PC-9 (cell line): ENCODE measurements at regions of chr2 and their contacts with region 1.

Region 1: DNA sequence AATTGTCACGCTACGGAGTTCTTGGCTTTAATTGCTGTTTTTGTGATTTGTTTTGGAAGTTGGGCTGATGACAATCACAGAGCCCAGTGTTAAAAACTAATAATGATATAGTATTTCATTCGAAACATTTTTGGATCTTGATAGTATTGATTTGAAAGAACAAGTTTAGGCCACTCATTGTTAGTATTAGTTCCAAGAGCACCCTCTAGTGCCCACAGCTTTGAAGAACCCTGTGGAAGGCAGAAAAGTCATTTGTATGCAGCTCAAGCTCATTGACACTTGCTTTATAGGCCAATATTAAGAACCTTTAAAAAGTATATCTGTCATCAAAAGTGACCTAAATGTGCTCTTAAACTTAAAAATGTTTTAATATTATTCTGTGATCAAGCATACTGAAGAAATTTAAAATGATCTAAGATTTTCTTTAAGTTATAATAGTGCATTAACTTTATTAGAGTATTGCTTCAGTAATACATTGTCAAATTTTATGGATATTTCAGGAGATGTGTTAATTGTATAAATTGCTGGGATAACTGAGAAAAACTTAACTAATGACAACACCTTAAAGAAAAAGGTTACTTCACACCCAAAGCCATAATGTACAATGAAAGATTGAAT is 191.0 kb downstream of the GRB14 start:
- DNase-seq: peak in 1 of 2 experiments; percentile 7
- H3K4me3 ChIP-seq: no peak overlapping the region
- H3K27ac ChIP-seq: no peak overlapping the region
- H3K4me1 ChIP-seq: no peaks in the 10 kb centered on the region
- H3K27me3 ChIP-seq: no peaks in the 10 kb centered on the region
- CTCF ChIP-seq: peak; percentile 67

Region 2: DNA sequence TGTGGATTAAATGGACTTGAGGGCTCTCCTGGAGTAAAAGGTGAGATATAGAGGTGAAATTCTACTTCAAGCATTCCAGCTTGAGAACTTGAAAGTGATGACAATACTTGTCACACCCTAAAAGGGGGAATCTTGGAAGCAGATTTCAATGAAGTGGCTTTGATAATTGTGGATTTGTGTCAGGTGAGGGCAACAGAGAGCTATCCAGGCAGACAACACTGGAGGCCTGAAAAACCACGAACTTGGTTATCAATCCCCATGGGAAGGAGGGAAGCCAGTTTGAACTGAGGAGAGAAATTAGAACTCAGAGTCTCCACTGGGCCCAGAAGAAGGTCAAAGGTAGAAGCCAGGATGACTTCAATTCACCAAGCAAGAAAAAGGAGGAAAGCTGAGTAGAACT is 958.3 kb before region 1 on chr2:
- CTCF ChIA-PET with region 1: no interaction called
- POLR2A ChIA-PET with region 1: no interaction called
- intact Hi-C with region 1: loop called (anchors 5 kb)
- DNase-seq: no peak
- H3K4me3 ChIP-seq: no peak overlapping the region
- H3K27ac ChIP-seq: no peak overlapping the region
- H3K4me1 ChIP-seq: no peaks in the 10 kb centered on the region
- H3K27me3 ChIP-seq: no peaks in the 10 kb centered on the region
- CTCF ChIP-seq: peak; percentile 41; the same call in 1 of the 2 replicates

Region 3: GRCh38 chr2:165044505-165045303 is 614.4 kb after region 1 on chr2:
- CTCF ChIA-PET with region 1: no interaction called
- POLR2A ChIA-PET with region 1: no interaction called
- intact Hi-C with region 1: no loop called
- DNase-seq: no peak
- H3K4me3 ChIP-seq: no peak overlapping the region
- H3K27ac ChIP-seq: no peak overlapping the region
- H3K4me1 ChIP-seq: no peaks in the 10 kb centered on the region
- H3K27me3 ChIP-seq: no peaks in the 10 kb centered on the region
- CTCF ChIP-seq: no peak